ENCODE measurements at regions of chr6 and their contacts with region 1.

Region 1: DNA sequence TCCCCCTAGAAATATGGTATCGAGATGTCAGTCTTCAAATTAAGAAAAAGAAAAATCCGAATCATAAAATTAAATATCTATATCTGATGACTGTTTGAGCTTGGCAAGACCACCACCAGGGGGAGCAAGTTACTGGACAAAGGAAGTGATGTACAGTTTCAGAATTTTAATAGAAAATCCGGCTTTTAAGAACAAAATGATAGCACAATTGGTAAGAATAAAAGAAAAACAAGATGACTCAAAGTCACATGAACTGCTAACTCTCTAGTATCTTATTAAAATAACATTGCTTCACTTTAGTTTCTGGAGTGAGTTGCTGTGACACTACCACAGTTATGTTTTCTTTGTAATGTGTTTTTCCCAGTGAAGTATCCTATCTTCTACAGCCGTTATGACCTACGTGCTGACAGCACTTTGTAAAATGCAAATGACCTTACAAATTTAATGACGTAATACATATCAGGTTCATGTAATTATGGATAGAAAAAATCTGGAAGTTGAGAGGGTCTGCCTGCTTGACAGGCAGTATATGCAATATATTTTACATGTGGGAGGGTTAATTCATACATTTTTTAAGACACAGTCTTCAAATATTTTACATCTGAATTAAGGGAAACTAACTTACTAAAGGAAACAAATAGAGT is 405.3 kb upstream of the HS3ST5 start:
- DNase-seq: peak; percentile 44 to 79 (median 60)
- H3K4me3 ChIP-seq: no peak overlapping the region
- H3K27ac ChIP-seq: no peak overlapping the region
- H3K4me1 ChIP-seq: no peaks in the 10 kb centered on the region
- H3K27me3 ChIP-seq: no peaks in the 10 kb centered on the region
- CTCF ChIP-seq: peak; percentile 32 to 79 (median 52)
- POLR2A ChIP-seq: no peak

Region 2: DNA sequence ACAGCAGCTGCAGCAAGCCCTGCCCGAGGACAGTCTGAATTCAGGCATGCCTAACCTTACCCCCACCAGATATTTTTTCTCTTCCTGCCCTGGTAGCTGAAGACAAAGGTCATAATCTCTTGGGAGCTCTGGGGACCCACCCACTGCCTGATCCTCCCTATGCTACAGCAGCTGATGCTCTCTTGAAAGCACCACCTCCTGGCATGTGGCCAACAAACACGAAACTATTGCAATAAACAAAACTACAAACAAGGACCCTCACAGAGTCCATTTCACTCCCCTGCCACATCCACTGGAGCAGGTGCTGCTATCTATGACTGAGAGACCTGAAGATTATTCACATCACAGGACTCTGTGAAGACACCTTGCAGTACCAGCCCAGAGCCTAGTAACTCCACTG is 166.8 kb before region 1 on chr6:
- intact Hi-C with region 1: no loop called
- DNase-seq: peak in 1 of 7 donors; percentile 1
- H3K4me3 ChIP-seq: no peak overlapping the region
- H3K27ac ChIP-seq: no peak overlapping the region
- H3K4me1 ChIP-seq: no peaks in the 10 kb centered on the region
- H3K27me3 ChIP-seq: no peaks in the 10 kb centered on the region
- CTCF ChIP-seq: no peak
- POLR2A ChIP-seq: no peak

Region 3: DNA sequence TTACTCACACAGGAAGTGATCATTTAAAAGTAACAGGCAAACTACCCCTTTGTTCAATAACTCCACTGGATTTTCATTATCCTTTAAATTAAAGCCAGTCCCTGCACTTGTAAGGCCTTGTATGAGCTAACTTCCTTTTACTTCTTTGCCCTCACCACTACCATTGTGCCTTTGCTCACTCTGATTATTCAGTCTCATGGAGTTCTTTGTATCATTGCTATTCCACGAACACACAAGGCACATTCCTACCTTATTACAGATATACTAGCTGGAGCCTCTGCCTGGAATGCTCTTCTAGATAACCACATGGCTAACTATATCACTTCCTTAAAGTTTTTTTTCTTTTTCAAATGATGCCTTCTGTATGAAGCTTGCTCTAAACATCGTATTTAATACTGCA is 343.4 kb after region 1 on chr6:
- intact Hi-C with region 1: no loop called
- DNase-seq: no peak
- H3K4me3 ChIP-seq: no peak overlapping the region
- H3K27ac ChIP-seq: no peak overlapping the region
- H3K4me1 ChIP-seq: no peaks in the 10 kb centered on the region
- H3K27me3 ChIP-seq: no peaks in the 10 kb centered on the region
- CTCF ChIP-seq: no peak
- POLR2A ChIP-seq: no peak

Region 4: GRCh38 chr6:115896538-115897129 is 1148.5 kb after region 1 on chr6:
- intact Hi-C with region 1: loop called in 1 of 2 experiments (anchors 5 kb)
- DNase-seq: peak in 2 of 7 donors; percentile 11 to 13
- H3K4me3 ChIP-seq: no peak overlapping the region
- H3K27ac ChIP-seq: no peak overlapping the region
- H3K4me1 ChIP-seq: peaks cover 0 to 8% of the 10 kb centered on the region in 2 donors
- H3K27me3 ChIP-seq: no peaks in the 10 kb centered on the region
- CTCF ChIP-seq: peak; percentile 46 to 79 (median 62)
- POLR2A ChIP-seq: no peak

Measured in adrenal gland (tissue), 19 donors.